Activated CD4-positive, alpha-beta memory T cell treated with anti-CD3 and anti-CD28 coated beads for 36 hours (primary cell): ENCODE measurements at regions of chr17 and their contacts with region 1.

Region 1: GRCh38 chr17:47840740-47841603 is at the start of gene SCRN2:
- DNase-seq: peak; percentile 95
- H3K4me3 Mint-ChIP-seq: peak within 1 kb of the TSS; percentile 91
- H3K27ac Mint-ChIP-seq: peak within 1 kb of the TSS; percentile 70
- H3K4me1 Mint-ChIP-seq: peaks cover 30% of the 10 kb centered on the region
- H3K27me3 Mint-ChIP-seq: peaks cover 15% of the 10 kb centered on the region
- total RNA-seq, gene SCRN2: 20.6 to 21.0 TPM

Region 2: DNA sequence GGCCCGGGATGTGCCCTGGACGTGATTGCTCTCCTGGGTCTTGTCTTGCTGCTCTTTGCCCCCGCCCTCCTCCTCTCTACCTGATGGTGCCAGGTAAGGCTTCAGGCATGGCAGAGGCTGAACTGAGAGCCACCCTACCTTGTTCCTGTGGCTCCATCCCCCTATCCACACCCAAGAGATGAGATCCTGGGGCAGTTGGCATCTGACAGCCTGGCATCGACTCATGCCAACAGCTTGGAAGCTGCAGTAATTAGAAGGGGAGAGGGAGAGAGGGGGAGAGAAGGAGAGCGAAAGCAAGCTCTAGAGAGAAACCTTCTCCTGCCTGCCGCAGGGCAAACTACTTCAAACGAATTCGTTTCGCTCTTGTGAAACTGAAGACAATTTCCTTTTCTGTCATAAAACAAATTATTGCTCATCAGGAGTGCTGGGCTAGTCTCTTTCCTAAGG is 23.8 kb after region 1 on chr17:
- CTCF ChIA-PET with region 1: interaction called, 15 read pairs
- POLR2A ChIA-PET with region 1: no interaction called
- intact Hi-C with region 1: no loop called
- DNase-seq: peak; percentile 38
- H3K4me3 Mint-ChIP-seq: no peak overlapping the region
- H3K27ac Mint-ChIP-seq: no peak overlapping the region
- H3K4me1 Mint-ChIP-seq: peaks cover 25% of the 10 kb centered on the region
- H3K27me3 Mint-ChIP-seq: peaks cover 3% of the 10 kb centered on the region

Region 3: GRCh38 chr17:47889734-47890529 is 49.0 kb after region 1 on chr17:
- CTCF ChIA-PET with region 1: interaction called, 672 read pairs
- POLR2A ChIA-PET with region 1: interaction called, 10 read pairs
- intact Hi-C with region 1: loop called (anchors 1 kb)
- DNase-seq: peak; percentile 94
- H3K4me3 Mint-ChIP-seq: no peak overlapping the region
- H3K27ac Mint-ChIP-seq: no peak overlapping the region
- H3K4me1 Mint-ChIP-seq: peaks cover 17% of the 10 kb centered on the region
- H3K27me3 Mint-ChIP-seq: no peaks in the 10 kb centered on the region

Region 4: DNA sequence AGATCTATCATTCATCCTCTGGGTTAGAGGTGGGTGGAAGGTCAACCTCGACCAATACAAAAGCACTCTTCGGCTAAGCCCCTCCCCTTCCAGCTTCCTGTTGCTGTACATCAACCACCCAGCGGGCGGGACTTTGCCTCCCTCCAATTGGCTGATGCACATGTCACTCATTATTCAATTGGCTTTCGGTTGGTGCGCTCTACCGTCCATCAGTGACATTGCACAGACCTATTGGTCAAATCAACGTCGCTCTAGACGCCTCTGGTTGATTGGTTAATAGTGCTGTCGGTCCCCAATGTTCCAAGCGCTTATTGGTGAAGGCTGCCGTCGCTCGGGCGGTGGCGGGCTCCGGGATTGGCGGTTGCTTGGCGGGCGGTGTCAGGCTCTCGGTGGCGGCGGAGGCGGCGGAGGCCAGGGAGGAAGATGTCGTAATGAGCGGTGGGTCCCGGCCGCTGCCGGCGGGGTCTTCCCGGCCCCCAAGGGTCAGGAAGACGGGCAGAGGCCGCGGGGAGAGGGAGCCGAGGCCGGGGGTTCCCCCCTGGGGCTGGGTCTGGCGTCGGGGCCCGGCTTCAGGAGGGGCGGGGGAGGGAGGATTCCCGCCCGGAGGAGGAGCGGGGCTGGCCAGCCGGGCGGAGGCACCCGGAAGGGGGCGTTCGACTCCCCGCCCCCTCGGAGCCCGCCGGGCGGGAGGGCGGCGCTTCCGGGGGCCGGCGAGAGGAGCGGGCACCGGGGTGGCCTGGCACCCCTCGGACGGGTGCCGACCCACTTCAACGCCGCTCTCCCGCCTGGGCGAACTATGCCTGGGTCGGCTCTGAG is 55.1 kb after region 1 on chr17 and contains the start of gene SP2:
- CTCF ChIA-PET with region 1: interaction called, 672 read pairs
- POLR2A ChIA-PET with region 1: interaction called, 15 read pairs
- intact Hi-C with region 1: loop called (anchors 1 kb)
- DNase-seq: peak; percentile 100
- H3K4me3 Mint-ChIP-seq: peak within 1 kb of the TSS; percentile 95
- H3K27ac Mint-ChIP-seq: peak within 1 kb of the TSS; percentile 87
- H3K4me1 Mint-ChIP-seq: peaks cover 34% of the 10 kb centered on the region
- H3K27me3 Mint-ChIP-seq: no peaks in the 10 kb centered on the region
- total RNA-seq, gene SP2: 15.1 to 17.2 TPM

Region 5: DNA sequence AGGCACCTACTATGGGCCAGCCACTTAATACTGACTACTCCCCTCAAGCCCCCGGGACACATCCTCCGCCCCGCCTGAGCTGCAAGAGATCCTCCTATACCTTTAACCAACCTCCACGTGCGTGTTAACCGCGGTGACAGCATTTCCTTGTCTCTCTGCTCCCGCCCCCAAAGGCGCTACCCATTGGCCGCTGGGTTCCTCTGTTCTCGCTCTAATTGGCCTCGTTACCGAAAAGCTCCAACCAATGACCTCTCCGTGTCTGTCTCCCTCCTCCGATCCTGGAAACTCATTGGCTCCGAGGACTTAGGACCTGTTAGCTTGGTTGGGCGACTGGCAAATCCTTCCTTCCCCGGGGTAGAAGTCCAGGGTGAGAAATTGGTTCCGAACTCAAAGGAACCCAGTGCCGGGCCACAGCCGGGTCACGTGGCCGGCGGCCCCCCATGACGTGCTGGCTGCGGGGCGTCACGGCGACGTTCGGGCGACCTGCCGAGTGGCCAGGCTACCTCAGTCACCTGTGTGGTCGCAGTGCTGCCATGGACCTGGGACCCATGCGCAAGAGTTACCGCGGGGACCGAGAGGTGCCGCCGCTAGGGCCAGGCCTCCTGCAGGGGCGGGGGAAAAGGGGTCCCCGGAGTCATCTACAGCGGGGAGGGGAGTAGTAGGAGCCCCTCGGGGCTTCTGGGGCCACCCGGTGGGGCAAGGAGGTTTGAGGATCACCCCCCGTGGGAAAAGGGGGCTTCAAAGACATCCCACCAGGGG is 100.4 kb after region 1 on chr17 and contains the start of gene PNPO:
- CTCF ChIA-PET with region 1: interaction called, 22 read pairs
- POLR2A ChIA-PET with region 1: interaction called, 6 read pairs
- intact Hi-C with region 1: loop called (anchors 2 kb)
- DNase-seq: peak; percentile 98
- H3K4me3 Mint-ChIP-seq: peak within 1 kb of the TSS; percentile 95
- H3K27ac Mint-ChIP-seq: peak within 1 kb of the TSS; percentile 81
- H3K4me1 Mint-ChIP-seq: peaks cover 52% of the 10 kb centered on the region
- H3K27me3 Mint-ChIP-seq: no peaks in the 10 kb centered on the region
- total RNA-seq, gene PNPO: 32.5 to 34.4 TPM

Region 6: GRCh38 chr17:48107168-48108132 is 266.5 kb after region 1 on chr17 and contains the start of gene SNX11:
- CTCF ChIA-PET with region 1: no interaction called
- POLR2A ChIA-PET with region 1: no interaction called
- intact Hi-C with region 1: loop called (anchors 10 kb)
- DNase-seq: peak; percentile 95
- H3K4me3 Mint-ChIP-seq: peak within 1 kb of the TSS; percentile 100
- H3K27ac Mint-ChIP-seq: peak within 1 kb of the TSS; percentile 97
- H3K4me1 Mint-ChIP-seq: peaks cover 59% of the 10 kb centered on the region
- H3K27me3 Mint-ChIP-seq: no peaks in the 10 kb centered on the region
- total RNA-seq, gene SNX11: 19.7 to 21.7 TPM